ENCODE measurements at regions of chr5 and their contacts with region 1.

Region 1: DNA sequence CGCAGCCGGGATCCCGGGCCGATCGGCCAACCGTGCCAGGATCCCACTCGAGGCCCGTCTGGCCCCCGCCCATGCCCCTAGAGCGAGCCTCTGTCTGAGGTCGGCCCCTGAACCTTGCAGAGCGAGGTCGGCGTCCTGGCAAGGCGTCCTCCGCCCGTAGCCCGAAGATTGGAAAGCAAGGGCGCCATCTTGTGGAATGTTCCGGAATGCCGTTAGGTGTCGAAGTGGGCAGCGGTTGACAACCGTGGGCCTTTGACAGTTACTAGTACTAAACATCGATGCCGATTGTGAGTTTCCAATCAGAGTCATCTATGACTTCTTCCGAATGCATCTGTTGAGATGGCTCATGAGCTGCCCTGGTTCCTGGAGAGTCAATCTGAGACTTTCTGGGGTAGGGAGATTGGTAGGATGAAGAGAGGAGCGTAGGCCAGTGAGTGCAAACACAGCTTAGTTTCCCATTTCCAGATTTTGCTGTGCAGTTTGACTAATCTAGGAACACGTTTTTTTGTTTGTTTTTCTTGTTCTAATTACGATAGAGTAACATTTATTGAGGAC is 923 bp upstream of the PLK2 start:
- DNase-seq: peak; percentile 82
- CTCF ChIP-seq: peak; percentile 82

Region 2: DNA sequence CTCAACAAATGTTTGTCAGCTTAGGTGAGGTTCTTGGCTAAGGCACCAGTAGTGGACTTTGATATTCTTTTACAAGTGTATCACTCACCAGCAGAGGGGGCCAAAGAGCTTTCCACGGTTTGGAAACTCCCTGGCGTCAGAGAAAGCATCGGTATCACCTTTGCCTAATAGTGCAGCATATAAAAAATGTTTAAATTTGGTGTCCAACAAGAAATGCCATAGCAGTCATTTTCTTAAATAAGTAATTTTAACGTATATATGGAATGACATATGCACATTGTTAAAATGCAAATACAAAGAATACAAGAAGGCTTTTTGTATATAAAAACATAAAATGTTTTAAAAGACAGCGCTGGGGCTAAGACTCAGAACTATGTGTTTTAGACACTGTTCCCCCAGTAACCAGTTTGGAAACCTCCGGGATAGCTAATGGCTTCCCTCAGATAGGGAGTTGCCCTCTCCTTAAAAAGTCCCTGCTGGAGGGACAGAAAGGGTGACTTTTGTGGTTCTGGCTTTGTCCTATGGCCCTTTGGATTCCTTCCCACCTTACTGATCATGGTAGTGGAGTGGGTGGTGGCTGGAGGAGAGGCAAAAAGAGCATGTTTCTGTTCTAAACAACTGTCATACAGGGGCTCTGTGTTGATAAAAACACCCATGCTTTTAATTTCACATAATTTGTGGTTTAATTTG is 1162.4 kb before region 1 on chr5:
- in situ Hi-C with region 1: loop called (anchors 10 kb)
- DNase-seq: peak; percentile 50
- CTCF ChIP-seq: peak; percentile 49

Region 3: GRCh38 chr5:57499262-57500050 is 961.4 kb before region 1 on chr5:
- in situ Hi-C with region 1: loop called (anchors 25 kb)
- DNase-seq: peak; percentile 33
- CTCF ChIP-seq: peak; percentile 29

Region 4: GRCh38 chr5:57779383-57780223 is 681.2 kb before region 1 on chr5:
- in situ Hi-C with region 1: loop called (anchors 10 kb)
- DNase-seq: peak; percentile 17
- CTCF ChIP-seq: peak; percentile 24

Region 5: DNA sequence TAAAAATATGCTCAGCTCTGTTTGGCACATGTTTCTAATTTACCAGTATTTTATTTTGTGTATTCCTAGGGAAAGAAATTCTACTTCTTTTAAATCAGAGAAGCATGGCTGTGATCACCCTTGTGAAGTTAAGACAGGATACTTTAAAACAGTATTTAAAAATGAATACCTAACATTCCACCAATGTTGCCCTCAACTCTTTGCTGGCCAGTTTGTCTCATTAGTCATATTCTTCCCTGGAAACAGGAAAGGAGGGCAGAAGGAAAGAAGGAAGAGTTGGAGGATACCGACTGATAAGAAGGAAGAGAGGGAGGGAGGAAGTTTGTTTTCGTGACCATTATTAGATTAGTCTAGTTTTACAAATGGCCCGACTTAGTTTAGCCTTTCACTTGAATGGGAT is 138.4 kb before region 1 on chr5:
- in situ Hi-C with region 1: no loop called
- DNase-seq: no peak
- CTCF ChIP-seq: no peak

Measured in GM13976 (cell line).